ENCODE measurements at regions of chr1 and their contacts with region 1.

Region 1: GRCh38 chr1:17606826-17607440 is 67.4 kb downstream of the ARHGEF10L start:
- DNase-seq: peak in 1 of 2 donors; percentile 84
- H3K4me3 ChIP-seq: no peak overlapping the region
- H3K27ac ChIP-seq: peak overlapping the region; percentile 72 to 83
- H3K4me1 ChIP-seq: peaks cover 18 to 49% of the 10 kb centered on the region in 2 donors
- H3K27me3 ChIP-seq: no peaks in the 10 kb centered on the region
- CTCF ChIP-seq: peak; percentile 91 to 92 (median 91)

Region 2: DNA sequence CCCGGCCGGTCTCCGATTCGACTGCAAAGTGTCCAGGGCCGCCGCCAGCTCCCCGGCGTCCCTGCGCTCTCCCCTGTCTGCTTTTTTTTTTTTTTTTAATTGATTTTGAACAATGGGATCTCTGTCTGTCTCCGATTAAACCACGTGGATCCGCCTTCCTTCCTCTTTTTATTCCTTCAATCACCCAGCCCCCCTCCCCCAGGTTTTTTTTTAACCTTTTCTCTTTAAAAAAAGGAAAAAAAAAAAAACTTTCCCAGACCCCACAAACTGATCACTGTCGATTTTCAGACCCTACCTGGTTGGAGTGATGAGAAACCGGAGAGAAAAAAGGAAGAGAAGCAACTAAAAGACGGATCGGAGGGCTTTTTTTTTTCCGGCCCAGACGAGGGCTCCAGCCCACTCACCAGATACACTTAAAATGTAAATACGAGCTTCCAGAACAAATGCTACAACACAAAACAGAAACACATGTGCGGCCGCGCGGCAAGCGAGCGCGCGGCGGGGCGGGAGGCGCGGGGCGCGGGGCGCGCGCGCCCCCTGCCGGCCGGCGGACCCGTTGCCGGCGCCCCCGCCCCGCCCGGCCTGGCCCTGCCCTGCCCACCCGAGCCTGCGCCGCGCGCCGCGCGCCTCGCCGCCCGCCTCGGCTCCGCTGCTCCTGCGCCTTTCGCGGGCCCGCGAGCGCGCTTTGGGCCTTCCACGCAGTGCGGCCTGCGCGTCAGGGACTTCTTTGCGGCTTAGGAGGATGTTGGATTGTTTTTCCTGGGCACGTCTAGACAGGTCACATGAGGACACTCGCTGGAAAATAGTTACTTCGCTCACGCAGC is 167.5 kb before region 1 on chr1 and contains the start of gene RCC2:
- intact Hi-C with region 1: loop called (anchors 5 kb)
- DNase-seq: peak in 1 of 2 donors; percentile 77
- H3K4me3 ChIP-seq: peak within 1 kb of the TSS; percentile 75 to 88
- H3K27ac ChIP-seq: peak within 1 kb of the TSS; percentile 26 to 73
- H3K4me1 ChIP-seq: peaks cover 6 to 8% of the 10 kb centered on the region in 2 donors
- H3K27me3 ChIP-seq: no peaks in the 10 kb centered on the region
- CTCF ChIP-seq: peak in 1 of 3 experiments; percentile 3
- total RNA-seq, gene RCC2: 57.2 TPM

Region 3: GRCh38 chr1:17502326-17502778 is 104.6 kb before region 1 on chr1:
- intact Hi-C with region 1: loop called (anchors 1 kb)
- DNase-seq: peak; percentile 46 to 92
- H3K4me3 ChIP-seq: no peak overlapping the region
- H3K27ac ChIP-seq: peak overlapping the region in 1 of 2 donors; percentile 64
- H3K4me1 ChIP-seq: peaks cover 0 to 9% of the 10 kb centered on the region in 2 donors
- H3K27me3 ChIP-seq: no peaks in the 10 kb centered on the region
- CTCF ChIP-seq: peak; percentile 89 to 94 (median 90)

Measured in ascending aorta (tissue), 2 donors.